Activated naive CD4-positive, alpha-beta T cell treated with anti-CD3 and anti-CD28 coated beads for 36 hours (primary cell): ENCODE measurements at regions of chr1 and their contacts with region 1.

Region 1: DNA sequence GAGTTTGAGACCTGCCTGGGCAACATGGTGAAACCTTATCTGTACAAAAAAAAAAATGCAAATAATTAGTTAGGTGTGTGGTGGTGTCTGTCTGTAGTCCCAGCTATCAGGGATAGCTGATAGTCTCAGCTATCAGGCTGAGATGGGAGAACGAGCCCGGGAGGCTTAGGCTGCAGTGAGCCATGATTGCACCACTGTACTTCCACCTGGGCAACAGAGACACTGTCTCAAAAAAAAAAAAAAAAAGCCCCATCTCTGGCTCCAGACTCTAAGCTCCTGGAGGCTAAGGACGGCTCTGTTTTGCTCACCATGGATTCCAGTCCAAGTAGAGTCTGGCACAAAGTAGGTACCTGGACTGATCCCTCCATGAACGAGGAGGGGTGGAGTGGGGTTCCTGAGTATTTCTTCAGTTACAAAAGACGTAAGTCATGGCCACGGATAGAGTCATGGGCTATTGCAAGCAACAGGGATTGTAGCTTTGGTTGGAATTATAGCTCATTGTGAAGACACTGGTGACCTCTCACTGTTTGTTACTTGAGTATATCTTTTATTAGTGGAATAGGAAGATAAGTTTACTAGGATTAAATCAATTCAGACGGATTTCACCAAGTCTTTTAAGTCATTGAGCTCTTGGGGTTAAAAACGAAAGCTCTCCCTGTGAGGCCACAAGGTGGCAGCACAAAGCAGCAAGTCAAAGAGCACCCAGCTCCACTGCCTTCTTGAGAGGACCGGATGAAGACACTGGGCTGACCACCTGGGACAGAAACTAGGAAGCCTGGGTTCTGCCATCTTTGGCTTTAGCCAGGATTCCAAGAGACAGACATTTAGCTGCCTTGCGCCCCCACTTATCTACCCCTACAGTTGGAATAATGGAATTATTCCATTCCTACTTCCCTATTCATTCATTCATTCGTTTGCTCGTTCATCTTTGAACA is 35.6 kb upstream of the TMEM61 start:
- DNase-seq: peak; percentile 81
- H3K4me3 Mint-ChIP-seq: no peak overlapping the region
- H3K27ac Mint-ChIP-seq: no peak overlapping the region
- H3K4me1 Mint-ChIP-seq: peaks cover 2% of the 10 kb centered on the region
- H3K27me3 Mint-ChIP-seq: peaks cover 2% of the 10 kb centered on the region

Region 2: GRCh38 chr1:54671985-54672608 is 272.8 kb before region 1 on chr1:
- CTCF ChIA-PET with region 1: no interaction called
- intact Hi-C with region 1: loop called (anchors 5 kb)
- DNase-seq: peak; percentile 84
- H3K4me3 Mint-ChIP-seq: no peak overlapping the region
- H3K27ac Mint-ChIP-seq: no peak overlapping the region
- H3K4me1 Mint-ChIP-seq: no peaks in the 10 kb centered on the region
- H3K27me3 Mint-ChIP-seq: no peaks in the 10 kb centered on the region

Region 3: DNA sequence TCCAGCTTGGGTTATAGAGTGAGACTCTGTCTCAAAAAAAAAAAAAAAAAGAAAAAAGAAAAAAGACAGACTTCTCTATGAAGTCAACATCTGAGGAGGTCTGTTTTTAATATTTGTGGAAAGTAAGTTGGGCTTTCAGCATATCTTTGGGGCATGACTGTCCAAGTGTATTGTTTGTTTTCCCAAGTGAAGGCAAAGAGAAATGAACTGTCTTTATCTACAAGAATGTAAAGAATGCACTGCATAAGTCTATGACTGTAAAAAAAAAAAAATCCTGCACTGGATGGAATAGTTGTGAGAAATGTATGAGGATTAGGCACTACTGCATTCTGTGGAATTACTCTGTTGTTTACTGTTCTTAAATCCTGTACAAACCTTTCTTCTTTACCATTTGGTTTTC is 10.0 kb before region 1 on chr1:
- CTCF ChIA-PET with region 1: interaction called, 14 read pairs
- intact Hi-C with region 1: no loop called
- DNase-seq: no peak
- H3K4me3 Mint-ChIP-seq: no peak overlapping the region
- H3K27ac Mint-ChIP-seq: no peak overlapping the region
- H3K4me1 Mint-ChIP-seq: peaks cover 10% of the 10 kb centered on the region
- H3K27me3 Mint-ChIP-seq: peaks cover 5% of the 10 kb centered on the region

Region 4: DNA sequence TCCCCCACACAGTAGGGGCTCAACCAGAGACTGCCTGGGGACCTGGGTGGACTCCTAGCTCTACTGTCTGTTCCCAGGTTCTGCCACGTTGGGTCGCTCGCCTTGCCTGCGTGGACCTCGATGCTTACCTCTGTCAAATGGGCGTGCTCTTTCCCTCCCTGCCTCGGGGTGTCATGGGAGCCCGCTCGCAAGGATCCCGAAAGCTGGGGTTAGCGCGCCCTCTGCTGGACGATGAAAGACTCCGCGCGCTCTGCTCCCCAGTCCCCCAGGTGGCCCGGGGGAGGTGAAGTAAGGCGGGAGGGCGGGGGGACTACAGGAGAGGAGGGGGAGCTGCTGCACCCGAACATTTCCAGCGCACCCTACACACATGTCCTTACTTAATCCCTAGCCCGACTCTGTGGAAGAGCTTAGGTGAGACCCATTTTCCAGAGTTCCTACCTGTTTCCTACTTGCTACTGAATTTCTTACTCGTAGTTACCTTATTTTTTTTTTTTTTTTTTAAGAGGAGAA is 51.5 kb after region 1 on chr1:
- CTCF ChIA-PET with region 1: interaction called, 72 read pairs
- intact Hi-C with region 1: loop called (anchors 1 kb)
- DNase-seq: peak; percentile 89
- H3K4me3 Mint-ChIP-seq: no peak overlapping the region
- H3K27ac Mint-ChIP-seq: no peak overlapping the region
- H3K4me1 Mint-ChIP-seq: peaks cover 18% of the 10 kb centered on the region
- H3K27me3 Mint-ChIP-seq: peaks cover 40% of the 10 kb centered on the region

Region 5: DNA sequence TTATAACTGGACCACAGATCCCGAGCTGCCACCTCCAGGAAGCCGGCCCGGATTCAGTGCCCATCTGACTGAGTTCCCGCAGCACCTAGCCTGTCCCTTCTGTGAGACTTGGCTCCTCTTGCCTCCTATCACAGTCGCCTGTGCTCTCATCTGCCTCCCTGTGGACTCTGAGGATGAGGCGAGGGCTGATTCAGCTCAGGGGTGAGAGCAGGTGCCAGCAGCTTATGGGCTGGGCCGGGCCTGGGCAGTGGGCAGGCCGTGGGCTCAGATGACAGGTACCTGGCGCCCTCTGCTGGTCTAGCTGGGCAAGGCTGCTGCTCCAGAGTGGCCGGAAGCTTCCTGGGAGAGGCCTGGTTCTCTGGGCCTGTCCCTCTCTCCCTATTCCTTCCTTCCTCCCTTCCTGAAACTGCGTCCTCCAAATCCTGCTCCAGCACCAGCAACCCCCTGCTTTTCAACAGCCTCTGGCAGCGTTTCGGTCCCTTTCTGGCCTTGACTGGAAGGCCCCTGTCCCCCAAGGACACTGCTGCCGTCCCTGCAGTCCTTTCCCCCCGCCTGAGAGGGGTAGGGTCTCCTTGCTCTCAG is 77.2 kb after region 1 on chr1:
- CTCF ChIA-PET with region 1: interaction called, 70 read pairs
- intact Hi-C with region 1: loop called (anchors 1 kb)
- DNase-seq: peak; percentile 82
- H3K4me3 Mint-ChIP-seq: no peak overlapping the region
- H3K27ac Mint-ChIP-seq: no peak overlapping the region
- H3K4me1 Mint-ChIP-seq: no peaks in the 10 kb centered on the region
- H3K27me3 Mint-ChIP-seq: no peaks in the 10 kb centered on the region

Region 6: DNA sequence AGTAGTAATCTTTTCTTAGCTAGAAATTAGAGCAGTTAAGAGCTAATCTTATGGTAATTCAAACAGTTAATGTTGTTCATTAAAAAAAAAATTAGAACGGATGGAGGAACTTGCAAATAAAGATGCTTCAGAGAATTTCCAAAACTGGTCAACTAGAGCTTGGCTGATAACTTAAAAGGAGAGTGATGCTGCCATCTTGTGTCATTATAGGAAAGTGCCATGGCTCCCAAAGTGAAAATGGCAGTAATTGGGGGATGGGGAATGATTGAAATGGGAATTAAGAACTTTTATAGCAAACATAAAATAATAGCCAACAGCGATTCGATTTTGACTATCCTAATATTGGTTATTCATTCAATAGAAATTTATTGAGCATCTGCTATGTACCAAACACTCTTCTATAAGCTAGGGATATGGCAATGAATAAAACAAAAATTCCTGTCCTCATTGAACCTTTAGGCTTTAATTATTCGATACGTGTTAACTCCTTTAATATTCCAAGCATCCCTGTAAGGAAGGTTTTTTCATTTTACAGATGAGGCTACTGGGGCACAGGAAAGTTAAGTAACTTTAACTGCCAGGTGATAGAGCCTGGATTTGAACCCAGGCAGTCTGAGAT is 1640.1 kb after region 1 on chr1:
- CTCF ChIA-PET with region 1: no interaction called
- intact Hi-C with region 1: loop called (anchors 10 kb)
- DNase-seq: peak; percentile 9
- H3K4me3 Mint-ChIP-seq: no peak overlapping the region
- H3K27ac Mint-ChIP-seq: no peak overlapping the region
- H3K4me1 Mint-ChIP-seq: no peaks in the 10 kb centered on the region
- H3K27me3 Mint-ChIP-seq: peaks cover 12% of the 10 kb centered on the region